ENCODE measurements at regions of chr7 and their contacts with region 1.

Region 1: DNA sequence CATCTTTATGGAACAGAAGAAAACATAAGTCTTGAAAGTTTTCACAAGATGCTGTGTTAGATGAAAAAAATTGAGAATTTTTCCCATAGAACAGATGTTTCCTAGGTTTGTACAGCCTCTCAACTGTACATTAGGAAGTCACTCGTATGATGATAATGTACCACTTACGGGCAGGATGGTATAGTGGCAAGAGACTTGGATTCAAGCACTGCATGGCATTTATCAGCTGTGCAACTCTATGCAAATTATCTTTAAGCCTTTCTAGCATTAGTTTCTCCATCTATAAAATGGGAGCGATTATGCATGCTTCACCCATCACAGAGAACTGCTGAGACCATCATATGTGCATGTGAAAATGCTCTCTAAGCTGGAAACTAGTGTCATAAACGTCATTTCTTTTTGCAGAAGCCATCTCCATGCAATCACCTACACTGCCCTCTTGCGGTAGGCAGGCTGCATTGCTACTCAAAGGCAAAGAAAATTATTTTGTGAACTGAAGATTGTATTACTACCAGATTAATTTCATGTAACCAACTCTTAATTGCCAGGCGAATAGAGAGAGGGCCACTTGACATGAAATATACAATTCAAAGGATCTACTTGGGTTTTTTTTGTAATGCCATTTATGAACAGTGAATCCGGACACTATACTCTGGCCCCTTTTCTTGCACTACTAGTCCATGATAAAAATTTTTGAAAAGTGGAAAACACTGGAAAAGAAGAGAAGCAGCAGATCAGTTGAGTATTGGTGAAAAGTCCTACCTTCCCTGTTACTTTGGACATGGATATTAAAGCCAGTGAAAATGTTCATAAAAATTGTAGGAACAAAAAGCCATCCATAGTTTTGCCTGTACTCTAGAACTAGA is 102.3 kb downstream of the JAZF1 start:
- DNase-seq: peak; percentile 62
- ATAC-seq: peak; percentile 83
- H3K4me3 ChIP-seq: no peak overlapping the region
- H3K27ac ChIP-seq: no peak overlapping the region
- H3K4me1 ChIP-seq: peaks cover 9% of the 10 kb centered on the region
- H3K27me3 ChIP-seq: no peaks in the 10 kb centered on the region
- CTCF ChIP-seq: peak; percentile 95
- POLR2A ChIP-seq: no peak
- RAD21 ChIP-seq: peak; percentile 79

Region 2: GRCh38 chr7:28041491-28042314 is 36.6 kb before region 1 on chr7:
- CTCF ChIA-PET with region 1: interaction called, 6 read pairs
- POLR2A ChIA-PET with region 1: no interaction called
- dilution Hi-C with region 1: no loop called
- in situ Hi-C with region 1: no loop called
- intact Hi-C with region 1: loop called (anchors 5 kb)
- DNase-seq: peak; percentile 90
- ATAC-seq: peak; percentile 63
- H3K4me3 ChIP-seq: no peak overlapping the region
- H3K27ac ChIP-seq: peak overlapping the region; percentile 78
- H3K4me1 ChIP-seq: peaks cover 18% of the 10 kb centered on the region
- H3K27me3 ChIP-seq: no peaks in the 10 kb centered on the region
- CTCF ChIP-seq: no peak
- POLR2A ChIP-seq: no peak
- RAD21 ChIP-seq: no peak

Region 3: GRCh38 chr7:28062197-28062991 is 15.9 kb before region 1 on chr7:
- CTCF ChIA-PET with region 1: interaction called, 33 read pairs
- POLR2A ChIA-PET with region 1: interaction called, 3 read pairs
- dilution Hi-C with region 1: no loop called
- in situ Hi-C with region 1: no loop called
- intact Hi-C with region 1: no loop called
- DNase-seq: peak; percentile 65
- ATAC-seq: peak; percentile 80
- H3K4me3 ChIP-seq: no peak overlapping the region
- H3K27ac ChIP-seq: peak overlapping the region; percentile 82
- H3K4me1 ChIP-seq: peaks cover 20% of the 10 kb centered on the region
- H3K27me3 ChIP-seq: no peaks in the 10 kb centered on the region
- CTCF ChIP-seq: peak; percentile 58
- POLR2A ChIP-seq: no peak
- RAD21 ChIP-seq: peak; percentile 66

Region 4: GRCh38 chr7:28329661-28330363 is 251.5 kb after region 1 on chr7:
- CTCF ChIA-PET with region 1: no interaction called
- POLR2A ChIA-PET with region 1: no interaction called
- dilution Hi-C with region 1: no loop called
- in situ Hi-C with region 1: no loop called
- intact Hi-C with region 1: no loop called
- DNase-seq: no peak
- ATAC-seq: no peak
- H3K4me3 ChIP-seq: no peak overlapping the region
- H3K27ac ChIP-seq: no peak overlapping the region
- H3K4me1 ChIP-seq: peaks cover 2% of the 10 kb centered on the region; the same call in 1 of the 2 replicates
- H3K27me3 ChIP-seq: peaks cover 4% of the 10 kb centered on the region; the same call in 1 of the 2 replicates
- CTCF ChIP-seq: no peak
- POLR2A ChIP-seq: no peak
- RAD21 ChIP-seq: no peak

Measured in IMR-90 (cell line).